ENCODE measurements at regions of chr14 and their contacts with region 1.

Region 1: GRCh38 chr14:74257078-74257989 is 18.1 kb downstream of the VSX2 start:
- DNase-seq: peak; percentile 48
- H3K4me3 ChIP-seq: peak overlapping the region; percentile 58 to 62
- H3K27ac ChIP-seq: no peak overlapping the region
- H3K4me1 ChIP-seq: peaks cover 4% of the 10 kb centered on the region
- H3K27me3 ChIP-seq: no peaks in the 10 kb centered on the region
- CTCF ChIP-seq: peak; percentile 69 to 99 (median 94)
- POLR2A ChIP-seq: no peak

Region 2: DNA sequence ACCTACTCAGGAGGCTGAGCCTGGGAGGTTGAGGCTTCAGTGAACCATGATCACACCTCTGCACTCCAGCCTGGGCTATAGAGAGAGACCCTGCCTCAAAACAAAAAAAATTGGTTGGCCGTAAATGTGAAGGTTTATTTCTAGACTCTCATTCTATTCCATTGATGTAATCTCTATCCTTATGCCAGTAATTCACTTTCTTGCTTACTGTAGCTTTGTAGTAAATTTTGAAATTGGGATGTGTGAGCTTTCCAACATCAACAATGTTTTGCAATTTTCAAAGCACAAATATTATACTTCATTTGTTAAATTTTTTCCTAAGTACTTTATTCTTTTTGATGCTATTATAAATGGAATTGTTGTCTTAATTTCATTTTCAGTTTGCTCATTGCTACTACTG is 148.0 kb before region 1 on chr14:
- intact Hi-C with region 1: loop called (anchors 10 kb)
- DNase-seq: no peak
- H3K4me3 ChIP-seq: no peak overlapping the region
- H3K27ac ChIP-seq: no peak overlapping the region
- H3K4me1 ChIP-seq: no peaks in the 10 kb centered on the region
- H3K27me3 ChIP-seq: no peaks in the 10 kb centered on the region
- CTCF ChIP-seq: no peak
- POLR2A ChIP-seq: no peak

Region 3: DNA sequence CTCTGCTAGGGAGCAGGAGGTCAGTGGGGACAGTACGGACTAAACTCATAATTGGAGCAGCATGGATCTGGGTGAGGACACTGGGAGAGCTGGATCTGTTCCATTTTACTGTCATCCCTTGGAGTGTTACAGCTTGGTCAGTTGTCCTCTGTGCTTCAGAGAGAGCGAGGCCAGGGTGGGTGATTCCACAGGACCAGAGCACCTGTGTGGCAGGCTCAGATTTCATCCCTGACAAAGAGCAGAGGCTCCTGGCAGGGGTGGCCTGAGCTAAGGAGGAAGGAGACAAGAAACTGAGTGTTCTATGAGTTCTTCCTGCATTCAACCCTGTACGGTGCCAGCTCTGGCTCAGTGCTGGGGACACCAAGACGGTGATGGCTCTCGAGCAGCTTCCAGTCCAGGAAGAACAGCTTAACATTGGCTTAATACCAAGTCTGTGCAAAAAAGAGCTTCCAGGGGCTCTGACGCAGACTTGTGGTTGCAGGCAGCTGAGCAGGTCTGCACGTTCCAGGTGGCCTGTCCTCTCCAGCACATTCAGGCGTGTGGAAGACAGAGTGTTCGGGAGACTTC is 706.5 kb after region 1 on chr14:
- intact Hi-C with region 1: no loop called
- DNase-seq: no peak
- H3K4me3 ChIP-seq: no peak overlapping the region
- H3K27ac ChIP-seq: no peak overlapping the region
- H3K4me1 ChIP-seq: no peaks in the 10 kb centered on the region
- H3K27me3 ChIP-seq: no peaks in the 10 kb centered on the region
- CTCF ChIP-seq: no peak
- POLR2A ChIP-seq: no peak